ENCODE measurements at regions of chr17 and their contacts with region 1.

Region 1: DNA sequence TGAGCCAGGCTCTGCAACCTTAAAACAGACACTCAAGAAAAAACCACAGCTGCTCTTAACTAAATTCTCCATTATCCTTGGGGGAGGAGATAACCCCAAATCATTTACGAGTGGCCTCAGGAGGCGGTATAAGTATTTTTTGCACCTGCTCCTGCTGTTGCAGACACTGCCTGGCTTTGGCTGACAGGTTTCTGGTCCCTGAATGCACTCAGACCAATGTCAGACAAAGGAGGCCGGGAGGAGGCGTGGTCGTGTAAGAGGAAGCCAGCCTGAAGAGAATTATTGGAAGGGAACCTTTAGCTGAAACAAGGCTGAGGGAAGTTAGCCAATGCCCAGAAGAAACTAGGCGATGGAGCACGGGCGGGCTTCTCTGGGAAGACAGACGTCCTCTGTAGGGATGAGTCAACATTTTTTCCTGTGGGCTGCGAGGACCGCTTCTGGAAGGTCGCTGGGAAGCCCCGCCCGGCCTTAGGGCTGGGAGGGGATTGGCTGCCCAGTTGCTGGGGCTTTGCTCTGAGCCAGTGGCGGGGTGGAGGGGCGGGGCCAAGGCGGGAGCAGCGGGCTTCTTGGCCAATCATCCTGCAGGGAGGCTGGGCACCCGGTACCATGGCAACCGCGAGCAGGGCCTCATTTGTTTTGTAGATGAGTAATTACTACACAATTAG is 82.3 kb downstream of the CCDC182 start:
- DNase-seq: peak; percentile 98

Region 2: GRCh38 chr17:57396511-57396921 is 266.3 kb before region 1 on chr17:
- intact Hi-C with region 1: loop called in 1 of 2 experiments (anchors 10 kb)
- DNase-seq: no peak

Region 3: GRCh38 chr17:57432520-57433277 is 230.1 kb before region 1 on chr17:
- intact Hi-C with region 1: loop called in 1 of 2 experiments (anchors 10 kb)
- DNase-seq: no peak

Region 4: DNA sequence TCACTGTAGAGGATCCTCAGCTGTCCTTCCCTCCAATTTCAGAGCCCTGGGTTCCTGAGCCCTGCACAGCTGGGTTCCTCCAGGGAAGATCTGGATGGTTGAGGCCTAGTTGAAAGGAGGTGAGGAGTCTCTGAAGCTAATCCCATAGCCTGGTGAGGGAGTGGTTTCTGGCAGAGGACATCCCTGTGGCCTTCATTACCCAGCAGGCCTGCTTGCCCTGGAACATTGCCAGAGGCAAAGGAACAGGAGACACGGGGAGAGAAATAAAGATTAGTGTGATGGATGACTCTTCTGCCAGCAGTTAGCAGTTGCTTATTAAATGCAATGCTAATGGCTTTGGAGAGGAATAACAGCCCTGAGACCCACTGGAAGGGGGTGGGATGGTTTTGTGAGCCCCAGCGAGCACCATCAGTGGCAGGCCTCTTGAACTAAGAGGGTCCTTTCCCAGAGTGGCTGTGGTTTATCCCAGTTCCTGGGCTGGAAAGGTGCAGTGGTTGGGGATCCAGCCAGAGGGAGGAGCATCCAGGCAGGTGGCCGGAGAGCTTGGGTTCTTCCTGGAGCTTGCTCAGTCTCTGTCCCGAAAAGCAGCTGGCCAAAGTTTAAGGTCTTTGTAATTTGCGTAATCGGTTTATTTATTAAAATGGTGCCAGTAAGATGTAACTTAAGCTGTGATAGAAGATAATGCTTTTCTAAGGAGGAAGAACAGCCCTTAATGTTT is 127.4 kb before region 1 on chr17:
- intact Hi-C with region 1: loop called in 1 of 2 experiments (anchors 10 kb)
- DNase-seq: no peak

Region 5: DNA sequence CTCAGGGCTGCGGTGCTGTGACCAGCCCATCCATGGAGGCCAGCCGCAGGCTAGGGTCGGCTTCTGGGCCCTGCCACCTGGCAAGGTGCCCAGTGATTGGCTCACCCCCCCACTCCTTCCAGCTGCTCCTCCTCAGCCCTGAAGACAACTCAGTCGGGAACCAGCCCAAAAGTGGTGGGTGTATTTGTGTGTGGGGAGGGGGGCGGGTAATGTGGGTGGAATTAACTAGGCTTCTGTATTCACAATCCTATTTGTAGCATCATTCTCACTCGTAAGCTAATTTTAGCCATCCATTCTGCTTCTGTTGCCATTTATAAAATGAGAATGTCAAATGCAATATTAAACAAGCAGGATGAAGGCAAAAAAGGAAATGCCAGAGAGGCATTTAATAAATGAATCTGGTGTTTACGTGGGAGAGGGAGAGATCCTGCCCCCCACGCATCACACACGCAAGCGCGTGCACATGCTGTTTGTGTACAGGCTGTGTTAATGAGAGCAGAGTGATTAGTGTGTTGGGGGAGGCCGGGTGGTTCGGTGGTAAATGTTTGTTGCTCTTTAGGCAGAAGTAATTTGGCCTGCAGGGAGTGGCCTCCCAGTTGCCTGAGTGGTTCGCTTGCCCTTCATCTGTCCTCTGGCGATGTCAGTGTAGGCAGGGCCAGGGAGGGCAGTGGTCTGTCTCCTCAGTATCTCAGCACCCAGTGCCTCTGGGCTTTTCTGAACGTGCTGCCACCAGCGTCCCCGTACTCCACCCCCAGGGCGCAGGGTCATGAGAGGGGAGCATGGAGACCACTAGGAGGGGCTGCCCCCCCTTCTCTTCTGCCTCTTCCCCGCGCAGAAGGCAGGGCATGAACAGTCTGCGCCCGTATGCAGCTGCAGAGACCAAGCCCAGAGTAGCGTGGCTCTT is 57.8 kb before region 1 on chr17:
- intact Hi-C with region 1: loop called (anchors 2 to 5 kb)
- DNase-seq: peak; percentile 73